ENCODE measurements at regions of chr17 and their contacts with region 1.

Region 1: DNA sequence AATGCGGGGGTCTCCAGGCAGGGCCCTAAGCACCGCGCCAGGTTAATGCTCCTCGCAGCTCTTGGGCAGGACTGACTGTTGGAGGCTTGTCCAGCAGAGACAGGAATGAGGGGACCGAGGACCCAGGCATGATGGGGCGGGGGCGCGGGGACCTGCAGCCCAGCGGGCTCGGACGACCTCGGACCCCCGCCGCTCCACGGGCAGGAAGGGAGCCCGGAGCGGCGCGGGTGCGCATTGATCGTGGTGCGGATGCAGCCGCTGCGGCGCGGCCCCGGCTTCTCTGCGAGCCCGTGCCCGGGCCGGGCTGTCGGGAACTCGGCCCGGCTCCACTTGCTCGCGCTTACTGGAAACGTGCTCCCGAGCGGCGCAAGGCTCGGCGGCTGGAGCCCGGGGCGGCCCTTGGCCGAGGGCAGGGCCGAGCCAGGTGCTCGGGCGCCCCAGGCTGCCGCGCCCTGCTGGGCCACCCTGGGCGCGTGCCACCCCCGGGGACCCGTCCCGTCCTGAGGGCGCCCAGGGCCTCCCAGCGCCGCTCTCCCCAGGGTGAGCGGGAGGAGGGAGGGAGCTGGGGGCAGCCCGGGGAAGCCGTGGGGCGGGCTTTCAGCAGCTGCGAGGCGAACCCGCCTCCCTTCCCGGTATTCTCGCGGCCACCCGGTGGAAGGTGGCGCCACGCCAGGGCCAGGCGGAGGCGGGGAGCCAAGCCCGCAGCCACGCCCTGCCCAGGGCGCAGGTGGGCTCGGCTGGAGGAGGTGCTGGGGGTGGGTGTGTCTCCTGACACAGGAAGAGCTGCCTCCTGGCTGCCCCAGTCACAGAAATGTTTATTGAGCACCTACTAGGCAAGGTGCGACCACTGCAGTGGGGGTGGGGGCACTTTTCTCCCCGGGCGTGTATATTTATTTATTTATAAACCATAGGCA is 45.9 kb downstream of the SOCS3 start:
- DNase-seq: peak; percentile 89
- H3K4me3 Mint-ChIP-seq: peak overlapping the region; percentile 58
- H3K27ac Mint-ChIP-seq: peak overlapping the region; percentile 90
- H3K4me1 Mint-ChIP-seq: peaks cover 41% of the 10 kb centered on the region
- H3K27me3 Mint-ChIP-seq: no peaks in the 10 kb centered on the region

Region 2: DNA sequence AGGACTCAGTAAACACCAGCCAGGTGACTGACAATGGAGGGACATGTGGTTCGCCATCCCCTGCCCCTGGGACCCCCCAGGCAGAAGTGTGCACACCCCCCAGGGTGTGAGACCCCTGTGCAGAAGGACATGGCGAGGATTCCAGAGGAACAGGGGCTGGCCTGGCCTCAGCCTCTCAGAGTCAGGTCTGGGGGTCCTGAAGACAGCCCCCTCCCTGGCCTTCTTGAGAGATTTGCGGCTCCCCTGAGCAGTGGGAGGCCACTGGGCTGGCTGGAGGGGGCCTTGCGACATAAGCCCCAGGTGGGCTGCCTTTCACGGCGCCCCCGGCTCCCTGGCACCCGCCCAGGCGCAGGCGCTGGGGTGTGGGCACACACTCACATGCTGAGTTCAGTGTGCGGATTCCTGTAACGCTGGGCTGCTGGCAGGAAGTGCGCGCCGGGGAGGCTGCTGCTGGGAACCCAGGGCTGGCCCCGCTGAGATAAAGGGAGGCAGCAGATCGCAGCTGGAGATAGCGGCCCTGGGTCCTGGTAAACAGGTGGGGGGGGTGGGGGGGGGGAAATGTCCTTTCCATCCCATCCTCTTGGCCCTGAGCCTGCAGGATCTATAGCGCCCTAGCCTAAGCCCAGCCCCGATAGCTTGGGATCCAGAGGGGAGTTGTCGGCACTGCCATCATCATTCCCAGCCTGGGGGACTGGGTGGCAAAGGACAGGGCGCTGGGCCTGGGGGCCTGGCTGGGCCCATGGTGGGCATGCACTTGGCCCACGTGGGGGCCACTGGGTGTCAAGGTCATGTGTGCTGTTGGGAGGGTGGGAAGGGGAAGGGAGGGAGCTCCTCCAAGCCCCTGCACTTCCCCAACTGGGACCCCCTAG is 55.4 kb before region 1 on chr17:
- CTCF ChIA-PET with region 1: interaction called, 3 read pairs
- intact Hi-C with region 1: loop called (anchors 2 kb)
- DNase-seq: peak; percentile 95
- H3K4me3 Mint-ChIP-seq: peak overlapping the region; percentile 81
- H3K27ac Mint-ChIP-seq: peak overlapping the region; percentile 88
- H3K4me1 Mint-ChIP-seq: peaks cover 59% of the 10 kb centered on the region
- H3K27me3 Mint-ChIP-seq: no peaks in the 10 kb centered on the region

Region 3: GRCh38 chr17:78289802-78290363 is 24.1 kb before region 1 on chr17:
- CTCF ChIA-PET with region 1: interaction called, 5 read pairs
- intact Hi-C with region 1: loop called (anchors 1 kb)
- DNase-seq: peak; percentile 89
- H3K4me3 Mint-ChIP-seq: no peak overlapping the region
- H3K27ac Mint-ChIP-seq: no peak overlapping the region
- H3K4me1 Mint-ChIP-seq: peaks cover 2% of the 10 kb centered on the region
- H3K27me3 Mint-ChIP-seq: no peaks in the 10 kb centered on the region

Region 4: GRCh38 chr17:78343187-78343542 is 29.2 kb after region 1 on chr17:
- CTCF ChIA-PET with region 1: interaction called, 4 read pairs
- intact Hi-C with region 1: loop called (anchors 1 kb)
- DNase-seq: peak; percentile 59
- H3K4me3 Mint-ChIP-seq: peak overlapping the region; percentile 69
- H3K27ac Mint-ChIP-seq: peak overlapping the region; percentile 91
- H3K4me1 Mint-ChIP-seq: peaks cover 71% of the 10 kb centered on the region
- H3K27me3 Mint-ChIP-seq: no peaks in the 10 kb centered on the region

Measured in activated naive CD4-positive, alpha-beta T cell treated with anti-CD3 and anti-CD28 coated beads for 36 hours (primary cell).